ENCODE measurements at regions of chr11 and their contacts with region 1.

Region 1: DNA sequence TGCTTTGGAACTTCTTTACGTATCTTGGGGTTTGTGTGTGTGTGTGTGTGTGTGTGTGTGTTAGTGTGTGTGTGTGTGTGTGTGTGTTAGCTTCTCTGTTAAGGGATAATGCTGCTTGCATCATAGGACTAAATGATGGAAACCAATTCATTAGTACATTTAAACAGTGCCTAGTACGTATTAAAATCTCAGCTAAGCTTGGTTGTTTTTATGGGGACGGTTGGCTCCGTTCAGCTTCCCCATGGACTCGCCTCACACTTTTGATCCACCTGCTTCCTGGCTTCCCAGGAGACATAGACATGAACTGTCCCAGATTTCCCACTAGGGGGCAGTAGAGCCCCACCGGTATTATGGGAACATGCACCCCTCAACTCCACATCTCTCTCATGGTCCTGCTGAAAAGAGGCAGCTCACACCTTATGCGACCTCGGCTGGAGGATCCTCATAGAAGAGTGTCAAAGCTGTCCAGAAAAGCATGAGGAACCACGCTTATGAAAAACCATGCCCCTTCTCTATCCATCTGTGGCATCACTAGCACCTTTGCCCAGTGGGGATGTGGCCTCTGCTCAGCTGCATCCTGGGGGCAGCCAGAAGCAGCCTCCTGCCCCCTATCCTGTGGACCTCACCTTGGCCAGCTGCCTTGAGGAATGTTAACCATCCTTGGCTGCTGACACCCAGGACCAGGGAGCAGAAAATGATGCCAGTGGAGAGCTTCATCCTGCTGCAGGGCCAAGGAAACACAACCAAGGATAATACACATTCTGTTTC is 9.7 kb upstream of the SAAL1 start:
- DNase-seq: peak; percentile 61
- H3K4me3 ChIP-seq: no peak overlapping the region
- H3K27ac ChIP-seq: no peak overlapping the region
- H3K4me1 ChIP-seq: no peaks in the 10 kb centered on the region
- H3K27me3 ChIP-seq: no peaks in the 10 kb centered on the region
- CTCF ChIP-seq: peak; percentile 80 to 92

Region 2: GRCh38 chr11:17673951-17674350 is 441.6 kb before region 1 on chr11:
- CTCF ChIA-PET with region 1: no interaction called
- dilution Hi-C with region 1: no loop called
- in situ Hi-C with region 1: no loop called
- intact Hi-C with region 1: no loop called
- DNase-seq: peak; percentile 29
- H3K4me3 ChIP-seq: no peak overlapping the region
- H3K27ac ChIP-seq: no peak overlapping the region
- H3K4me1 ChIP-seq: no peaks in the 10 kb centered on the region
- H3K27me3 ChIP-seq: peaks cover 2% of the 10 kb centered on the region
- CTCF ChIP-seq: no peak

Region 3: GRCh38 chr11:18171377-18172000 is 55.9 kb after region 1 on chr11:
- CTCF ChIA-PET with region 1: interaction called, 9 read pairs
- dilution Hi-C with region 1: no loop called
- in situ Hi-C with region 1: no loop called
- intact Hi-C with region 1: loop called (anchors 2 kb)
- DNase-seq: peak; percentile 35
- H3K4me3 ChIP-seq: no peak overlapping the region
- H3K27ac ChIP-seq: no peak overlapping the region
- H3K4me1 ChIP-seq: peaks cover 8% of the 10 kb centered on the region
- H3K27me3 ChIP-seq: no peaks in the 10 kb centered on the region
- CTCF ChIP-seq: peak; percentile 53 to 78

Region 4: DNA sequence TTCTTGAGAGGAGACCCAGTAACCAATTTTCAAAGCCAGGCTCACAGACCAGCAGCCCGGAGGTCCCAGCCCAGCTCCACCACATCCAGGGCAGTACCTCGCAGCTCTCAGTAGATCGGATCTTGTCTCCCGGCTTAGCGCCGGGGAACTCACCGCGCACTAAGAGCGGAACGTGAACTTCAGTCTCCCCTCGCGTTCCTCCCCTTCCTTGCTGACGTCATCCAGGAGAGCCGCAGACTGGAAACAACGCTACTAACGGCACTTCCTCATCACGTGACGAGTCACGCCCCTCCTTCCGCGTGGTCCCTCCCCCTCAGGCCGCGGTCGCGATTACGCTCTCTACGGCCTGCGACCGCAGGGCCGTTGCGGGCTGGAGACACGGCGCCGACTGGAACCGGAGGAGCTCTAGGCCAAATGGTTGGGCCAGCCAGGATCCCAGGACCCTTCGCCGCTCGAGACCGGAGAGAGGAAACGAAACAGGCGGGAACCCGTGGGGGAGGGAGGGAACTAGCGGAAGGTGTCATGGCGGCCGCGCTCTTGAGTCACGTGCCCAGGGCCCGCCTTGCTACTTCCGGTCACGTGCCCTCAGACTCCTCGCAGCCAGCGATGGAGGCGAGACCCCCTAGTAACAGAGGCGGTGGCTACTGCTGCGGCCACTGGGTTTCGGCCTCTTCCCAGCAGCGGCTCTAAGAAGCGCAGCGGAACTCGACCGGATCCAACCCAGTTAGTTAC is 206.6 kb after region 1 on chr11 and contains the starts of genes GTF2H1 and HPS5:
- CTCF ChIA-PET with region 1: no interaction called
- dilution Hi-C with region 1: no loop called
- in situ Hi-C with region 1: no loop called
- intact Hi-C with region 1: loop called (anchors 10 kb)
- DNase-seq: peak; percentile 98
- H3K4me3 ChIP-seq: peak within 1 kb of the TSS; percentile 78 to 98 (median 94)
- H3K27ac ChIP-seq: peak within 1 kb of the TSS; percentile 93
- H3K4me1 ChIP-seq: peaks cover 31% of the 10 kb centered on the region
- H3K27me3 ChIP-seq: no peaks in the 10 kb centered on the region
- CTCF ChIP-seq: no peak
- total RNA-seq, gene GTF2H1: 67.5 to 98.9 TPM
- total RNA-seq, gene HPS5: 34.2 to 108 TPM

Region 5: DNA sequence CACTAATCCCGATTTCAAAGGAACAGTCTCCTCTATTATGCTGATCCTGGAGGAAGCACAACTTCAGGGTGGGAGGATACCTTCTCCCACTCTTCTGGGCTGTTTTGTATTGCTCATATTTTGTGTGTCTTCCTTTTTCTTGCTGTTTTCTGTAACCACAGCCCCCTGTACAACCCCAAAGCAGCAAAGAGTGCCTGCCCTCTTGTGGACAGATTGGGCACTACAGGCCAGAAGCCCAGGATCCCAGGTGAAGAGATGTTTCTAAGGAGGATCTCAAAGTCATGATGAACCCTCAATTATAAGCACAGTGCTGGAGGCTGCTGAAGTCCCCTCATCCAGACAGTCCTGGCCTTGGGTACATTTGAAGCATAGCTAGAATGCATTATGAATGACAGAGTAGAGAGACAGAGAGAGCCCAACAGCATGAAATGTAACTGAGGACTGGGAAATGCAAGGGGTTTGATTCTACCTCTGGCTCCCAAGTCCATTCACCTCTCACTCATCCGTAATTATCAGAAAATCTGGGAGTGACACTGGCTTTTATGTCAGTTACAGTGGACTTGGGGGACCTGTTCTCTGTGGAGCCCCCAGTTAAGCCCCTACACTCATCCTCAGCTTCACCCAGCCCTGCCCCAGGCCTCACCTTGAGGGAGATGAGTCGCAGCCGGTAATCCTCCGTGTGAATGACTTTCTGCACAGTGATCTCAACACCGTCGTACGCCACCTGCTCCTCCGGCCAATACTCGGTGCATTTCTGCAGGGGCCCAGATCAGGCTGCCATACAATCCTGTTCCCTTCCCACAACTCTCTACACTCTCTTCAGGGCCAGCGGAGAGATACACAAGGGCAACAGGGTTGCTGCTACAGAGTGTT is 616.6 kb after region 1 on chr11:
- CTCF ChIA-PET with region 1: no interaction called
- dilution Hi-C with region 1: no loop called
- in situ Hi-C with region 1: no loop called
- intact Hi-C with region 1: loop called (anchors 2 kb)
- DNase-seq: peak; percentile 24
- H3K4me3 ChIP-seq: no peak overlapping the region
- H3K27ac ChIP-seq: no peak overlapping the region
- H3K4me1 ChIP-seq: no peaks in the 10 kb centered on the region
- H3K27me3 ChIP-seq: no peaks in the 10 kb centered on the region
- CTCF ChIP-seq: peak; percentile 97 to 99

Region 6: GRCh38 chr11:18853086-18853720 is 737.7 kb after region 1 on chr11:
- CTCF ChIA-PET with region 1: no interaction called
- dilution Hi-C with region 1: no loop called
- in situ Hi-C with region 1: no loop called
- intact Hi-C with region 1: loop called (anchors 10 kb)
- DNase-seq: peak; percentile 41
- H3K4me3 ChIP-seq: no peak overlapping the region
- H3K27ac ChIP-seq: no peak overlapping the region
- H3K4me1 ChIP-seq: no peaks in the 10 kb centered on the region
- H3K27me3 ChIP-seq: no peaks in the 10 kb centered on the region
- CTCF ChIP-seq: peak; percentile 73 to 78